ENCODE measurements at regions of chr18 and their contacts with region 1.

Region 1: DNA sequence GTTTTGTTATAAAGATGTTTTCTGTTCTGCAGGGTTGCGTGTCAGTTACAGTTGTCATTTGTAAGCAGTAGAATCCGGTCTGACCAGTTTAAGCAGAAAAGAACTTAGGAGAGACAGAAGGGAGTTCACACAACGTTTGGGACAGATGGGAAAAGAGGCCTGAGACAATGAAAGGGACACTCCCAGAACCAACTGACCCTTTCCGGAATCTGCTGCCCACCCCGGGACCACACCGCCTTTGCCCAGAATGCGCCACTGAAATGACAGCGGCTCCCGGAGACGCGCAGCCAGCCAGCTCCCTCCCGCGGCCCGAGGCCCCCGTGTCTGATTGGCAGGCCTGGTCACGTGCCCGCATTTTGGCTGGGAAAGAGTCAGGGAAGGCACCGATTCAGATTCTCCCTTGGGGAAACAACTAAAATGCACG is 244.6 kb downstream of the BCL2 start:
- DNase-seq: peak; percentile 38
- H3K4me3 Mint-ChIP-seq: peak overlapping the region; percentile 66
- H3K27ac Mint-ChIP-seq: no peak overlapping the region
- H3K4me1 Mint-ChIP-seq: peaks cover 18% of the 10 kb centered on the region
- H3K27me3 Mint-ChIP-seq: peaks cover 24% of the 10 kb centered on the region

Region 2: DNA sequence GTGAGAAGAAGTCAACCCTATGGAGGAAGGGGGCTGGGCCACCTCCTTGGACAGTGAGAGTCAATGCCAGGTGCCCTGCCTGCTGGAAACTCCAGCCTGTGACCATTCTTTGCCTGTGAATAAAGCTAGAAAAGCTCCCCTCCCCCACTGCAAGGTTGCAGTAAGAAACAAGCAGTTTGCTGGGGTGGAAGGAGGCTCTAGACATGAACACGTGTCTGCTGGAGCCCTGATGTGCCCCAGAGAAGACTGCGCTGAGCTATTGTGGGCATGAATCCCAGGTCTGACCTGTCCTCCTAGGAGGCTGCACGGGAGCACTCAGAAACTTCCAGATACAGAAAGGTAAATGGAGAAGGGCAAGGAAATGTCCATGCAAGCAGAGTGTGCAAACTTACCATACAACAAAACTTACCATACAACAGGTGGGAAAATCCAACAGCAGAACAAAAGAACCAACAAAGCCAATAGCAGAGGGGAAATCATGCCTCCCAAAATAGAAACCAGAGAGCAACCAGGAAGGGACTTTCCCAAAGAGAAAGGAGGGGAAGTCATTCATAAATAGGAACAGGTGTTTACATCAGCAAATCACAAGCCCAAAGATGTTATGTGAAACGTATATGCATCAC is 34.1 kb before region 1 on chr18:
- intact Hi-C with region 1: loop called (anchors 2 kb)
- DNase-seq: no peak
- H3K4me3 Mint-ChIP-seq: peak overlapping the region; percentile 38
- H3K27ac Mint-ChIP-seq: peak overlapping the region; percentile 41
- H3K4me1 Mint-ChIP-seq: peaks cover 29% of the 10 kb centered on the region
- H3K27me3 Mint-ChIP-seq: peaks cover 23% of the 10 kb centered on the region

Region 3: DNA sequence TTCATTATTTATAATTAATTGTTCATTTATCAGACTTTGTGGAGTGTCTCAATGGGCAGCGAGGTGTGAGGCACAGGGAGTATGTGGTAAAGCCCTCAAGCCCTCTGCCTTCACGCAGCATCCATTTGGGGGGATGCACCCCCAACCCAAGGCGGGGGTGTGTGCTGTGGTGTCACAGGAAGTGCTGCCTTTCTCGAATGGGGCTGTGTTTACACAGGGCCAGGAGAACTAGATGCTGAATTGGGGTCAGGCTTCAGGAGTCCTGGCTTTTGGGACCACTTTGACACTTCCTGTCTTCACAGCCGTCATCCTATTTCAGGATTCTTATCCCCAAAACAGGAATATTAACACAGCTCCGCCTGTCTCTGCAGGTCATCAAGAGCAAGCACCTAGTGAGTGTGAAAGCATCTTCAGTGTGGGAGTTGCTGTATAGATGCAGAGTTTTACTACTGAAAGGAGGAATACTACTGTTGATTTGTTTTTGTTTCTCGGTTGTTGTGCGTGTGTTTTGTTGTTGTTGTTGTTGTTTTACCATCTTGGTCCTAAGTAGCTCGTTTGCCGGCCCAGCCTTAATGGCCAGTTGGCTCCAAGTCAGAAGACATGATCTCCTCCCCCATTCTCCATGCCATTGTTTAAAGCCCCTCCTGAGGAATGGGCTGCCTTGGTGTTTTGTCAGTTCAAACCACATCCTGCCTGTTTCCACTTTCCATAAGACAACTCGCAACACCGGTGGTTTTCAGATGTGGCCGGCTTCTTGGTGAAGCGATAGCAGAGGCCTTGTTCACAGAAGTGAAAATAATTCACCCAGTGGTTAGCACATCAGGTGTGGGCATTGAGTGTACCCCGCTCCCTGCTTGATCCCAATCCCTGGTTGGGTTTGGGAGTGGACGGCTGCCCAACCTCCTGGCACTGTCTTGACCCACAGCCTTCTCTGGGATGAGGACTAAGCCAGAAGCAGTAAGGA is 23.3 kb after region 1 on chr18:
- intact Hi-C with region 1: loop called (anchors 2 kb)
- DNase-seq: peak; percentile 63
- H3K4me3 Mint-ChIP-seq: peak overlapping the region; percentile 24
- H3K27ac Mint-ChIP-seq: peak overlapping the region; percentile 78
- H3K4me1 Mint-ChIP-seq: peaks cover 52% of the 10 kb centered on the region
- H3K27me3 Mint-ChIP-seq: peaks cover 53% of the 10 kb centered on the region

Region 4: GRCh38 chr18:63105636-63106316 is 30.8 kb after region 1 on chr18:
- intact Hi-C with region 1: loop called (anchors 2 kb)
- DNase-seq: no peak
- H3K4me3 Mint-ChIP-seq: no peak overlapping the region
- H3K27ac Mint-ChIP-seq: no peak overlapping the region
- H3K4me1 Mint-ChIP-seq: peaks cover 37% of the 10 kb centered on the region
- H3K27me3 Mint-ChIP-seq: peaks cover 20% of the 10 kb centered on the region